ENCODE measurements at regions of chr22 and their contacts with region 1.

Region 1: GRCh38 chr22:50599786-50600455 is 672 bp upstream of the MAPK8IP2 start:
- DNase-seq: peak in 1 of 3 donors; percentile 61
- ATAC-seq: peak; percentile 74 to 90 (median 82)
- H3K4me3 ChIP-seq: peak overlapping the region in 2 of 3 donors; percentile 29 to 35
- H3K27ac ChIP-seq: no peak overlapping the region
- H3K4me1 ChIP-seq: peaks cover 0 to 6% (median 0%) of the 10 kb centered on the region in 4 donors
- H3K27me3 ChIP-seq: peaks cover 6% of the 10 kb centered on the region in 2 donors
- CTCF ChIP-seq: no peak
- POLR2A ChIP-seq: no peak

Region 2: DNA sequence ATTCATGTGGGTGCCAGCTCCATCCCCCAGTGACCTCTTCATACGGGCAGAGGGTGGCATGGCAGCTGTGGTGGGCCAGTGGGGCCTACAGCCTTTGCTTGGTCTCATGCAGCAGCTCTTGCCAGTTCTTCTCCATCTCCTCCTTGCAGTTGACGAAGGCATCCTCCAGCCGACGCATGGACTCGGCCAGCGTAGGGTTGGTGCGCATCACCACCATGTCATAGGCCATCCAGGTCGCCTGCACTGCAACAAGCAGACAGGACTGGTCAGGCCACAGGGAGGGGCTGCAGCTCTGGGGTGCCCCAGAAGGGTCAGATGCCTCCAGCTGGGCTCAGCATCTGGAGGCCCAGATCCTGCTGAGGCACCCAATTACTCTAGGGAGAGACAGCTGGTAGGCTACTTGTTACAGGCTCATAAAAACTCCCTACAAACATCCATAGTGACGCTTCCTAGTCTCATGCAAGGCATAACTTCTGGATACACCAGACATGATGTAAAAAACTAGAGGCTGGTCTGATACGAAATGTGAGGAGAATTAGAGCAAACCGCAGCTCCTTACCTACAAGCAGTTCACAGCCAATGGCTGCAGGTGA is 48.7 kb before region 1 on chr22:
- intact Hi-C with region 1: loop called in 1 of 2 experiments (anchors 5 kb)
- DNase-seq: peak in 1 of 3 donors; percentile 45
- ATAC-seq: no peak
- H3K4me3 ChIP-seq: no peak overlapping the region
- H3K27ac ChIP-seq: no peak overlapping the region
- H3K4me1 ChIP-seq: peaks cover 0 to 8% (median 0%) of the 10 kb centered on the region in 4 donors
- H3K27me3 ChIP-seq: no peaks in the 10 kb centered on the region
- CTCF ChIP-seq: no peak
- POLR2A ChIP-seq: no peak

Region 3: DNA sequence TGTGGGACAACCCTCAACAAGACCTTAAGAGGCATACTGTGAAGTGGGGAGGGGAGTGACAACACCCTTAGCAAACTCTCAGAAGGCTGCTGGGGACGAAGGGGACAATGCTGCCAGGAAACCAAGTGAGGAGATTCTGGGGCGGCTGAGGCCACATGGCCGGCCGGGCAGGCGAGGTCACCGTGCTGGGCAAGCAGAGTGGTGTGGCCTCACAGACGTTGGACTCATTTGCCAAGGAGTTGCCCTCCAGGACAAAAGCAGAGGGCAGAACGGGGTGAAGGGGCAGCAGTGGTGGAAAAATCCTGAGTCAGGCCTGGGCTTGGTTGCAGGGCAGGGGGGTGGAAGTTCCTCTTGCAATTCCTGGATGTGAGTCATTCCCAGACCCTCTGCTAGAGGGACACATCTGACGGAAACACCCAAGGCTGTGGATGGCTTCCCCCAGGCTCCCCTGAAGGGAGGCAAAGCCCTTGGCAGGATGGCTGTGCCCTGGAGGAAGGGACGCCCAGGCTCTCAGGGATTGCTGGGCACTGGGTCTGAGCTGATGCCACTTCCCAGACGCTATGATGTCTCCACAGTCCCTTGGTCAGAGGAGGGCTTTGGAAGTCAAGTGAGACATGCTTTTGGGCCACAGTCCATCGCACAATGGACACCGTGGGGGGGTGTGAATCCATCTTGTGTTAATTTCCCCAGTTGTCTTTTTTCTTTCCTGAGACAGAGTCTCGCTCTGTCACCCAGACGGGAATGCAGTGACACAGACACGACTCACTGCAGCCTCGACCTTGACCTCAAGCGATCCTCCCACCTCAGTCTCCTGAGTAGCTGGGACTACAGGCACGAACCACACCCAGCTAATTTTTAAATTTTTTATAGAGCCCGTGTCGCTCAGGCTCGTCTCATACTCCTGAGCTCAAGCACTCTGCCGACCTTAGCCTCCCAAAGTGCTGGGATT is 56.5 kb after region 1 on chr22:
- intact Hi-C with region 1: no loop called
- DNase-seq: peak in 1 of 3 donors; percentile 48
- ATAC-seq: peak; percentile 76 to 89 (median 86)
- H3K4me3 ChIP-seq: no peak overlapping the region
- H3K27ac ChIP-seq: peak overlapping the region in 1 of 3 donors; percentile 38
- H3K4me1 ChIP-seq: no peaks in the 10 kb centered on the region
- H3K27me3 ChIP-seq: no peaks in the 10 kb centered on the region
- CTCF ChIP-seq: no peak
- POLR2A ChIP-seq: no peak

Measured in right lobe of liver (tissue), 6 donors.